Caco-2 (cell line): ENCODE measurements at regions of chr18 and their contacts with region 1.

Region 1: DNA sequence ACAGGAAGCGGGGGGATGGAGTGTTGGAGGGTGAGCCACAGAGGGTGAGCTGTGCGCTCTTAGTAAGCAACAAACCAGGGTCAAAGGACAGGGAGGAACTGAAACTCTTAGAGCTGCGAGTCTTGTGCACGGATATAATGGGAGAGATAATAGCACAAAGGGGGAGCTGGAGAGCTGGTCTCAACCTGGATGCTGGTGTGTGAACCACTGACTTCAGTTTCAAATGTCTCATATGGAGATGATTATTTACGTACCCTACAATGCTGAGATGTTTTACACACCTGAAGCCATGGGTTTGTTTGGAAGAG is 35.9 kb downstream of the PTGR3 start:
- DNase-seq: no peak
- H3K4me3 ChIP-seq: no peak overlapping the region
- H3K4me3 Mint-ChIP-seq: no peak overlapping the region
- H3K27ac Mint-ChIP-seq: no peak overlapping the region
- H3K4me1 ChIP-seq: no peaks in the 10 kb centered on the region
- H3K4me1 Mint-ChIP-seq: no peaks in the 10 kb centered on the region
- H3K27me3 ChIP-seq: no peaks in the 10 kb centered on the region
- H3K27me3 Mint-ChIP-seq: no peaks in the 10 kb centered on the region
- CTCF ChIP-seq: no peak

Region 2: GRCh38 chr18:75314115-75314514 is 141.0 kb after region 1 on chr18:
- CTCF ChIA-PET with region 1: no interaction called
- POLR2A ChIA-PET with region 1: no interaction called
- intact Hi-C with region 1: no loop called
- DNase-seq: no peak
- H3K4me3 ChIP-seq: no peak overlapping the region
- H3K4me3 Mint-ChIP-seq: no peak overlapping the region
- H3K27ac Mint-ChIP-seq: no peak overlapping the region
- H3K4me1 ChIP-seq: no peaks in the 10 kb centered on the region
- H3K4me1 Mint-ChIP-seq: no peaks in the 10 kb centered on the region
- H3K27me3 ChIP-seq: no peaks in the 10 kb centered on the region
- H3K27me3 Mint-ChIP-seq: peaks cover 2% of the 10 kb centered on the region
- CTCF ChIP-seq: no peak

Region 3: DNA sequence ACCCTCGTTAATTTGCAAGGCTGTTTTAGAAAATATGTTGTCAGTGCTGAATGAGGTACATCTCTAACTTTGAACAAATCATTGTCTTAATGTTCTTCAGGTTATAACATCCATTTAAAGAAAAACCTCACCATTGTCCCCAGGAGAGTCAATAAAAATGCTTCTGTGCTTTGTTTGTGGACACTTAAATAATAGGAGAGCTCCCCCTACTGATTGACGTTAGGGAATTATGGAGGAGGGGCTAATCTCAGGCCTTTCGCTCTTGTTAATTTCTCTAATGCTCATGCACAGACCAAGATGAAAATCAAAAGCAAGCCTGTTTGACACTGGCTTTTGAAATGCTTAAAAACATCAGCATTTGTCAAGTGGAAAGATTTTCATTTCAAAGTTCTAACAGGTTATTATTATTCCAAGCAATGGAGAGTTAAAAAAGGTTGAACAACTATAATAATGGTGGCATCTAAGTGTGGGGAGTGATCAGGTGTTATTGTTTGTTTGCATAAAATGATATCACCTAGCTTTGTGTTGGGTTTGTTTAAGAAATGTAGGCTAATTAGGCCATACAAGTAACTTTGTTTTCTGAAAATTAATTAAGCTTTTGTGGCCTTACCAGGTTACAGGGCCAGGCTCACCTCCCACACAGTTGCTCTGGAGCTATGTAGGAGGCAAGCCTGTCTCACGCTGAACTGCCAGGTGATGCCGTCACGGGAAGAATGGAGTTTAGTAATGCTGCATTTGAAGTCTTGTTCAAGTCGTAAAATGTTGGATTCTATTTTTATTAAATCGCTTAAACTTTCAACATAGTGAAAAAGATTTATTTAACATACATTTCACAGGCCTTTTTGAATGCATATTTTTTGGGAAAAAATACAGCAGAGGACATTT is 306.2 kb after region 1 on chr18:
- CTCF ChIA-PET with region 1: no interaction called
- POLR2A ChIA-PET with region 1: no interaction called
- intact Hi-C with region 1: loop called (anchors 5 kb)
- DNase-seq: peak in 1 of 2 experiments; percentile 1
- H3K4me3 ChIP-seq: no peak overlapping the region
- H3K4me3 Mint-ChIP-seq: no peak overlapping the region
- H3K27ac Mint-ChIP-seq: no peak overlapping the region
- H3K4me1 ChIP-seq: no peaks in the 10 kb centered on the region
- H3K4me1 Mint-ChIP-seq: no peaks in the 10 kb centered on the region
- H3K27me3 ChIP-seq: no peaks in the 10 kb centered on the region
- H3K27me3 Mint-ChIP-seq: no peaks in the 10 kb centered on the region
- CTCF ChIP-seq: peak in 1 of 2 experiments; percentile 7